WTC11 (cell line): ENCODE measurements at regions of chr7 and their contacts with region 1.

Region 1: GRCh38 chr7:2471396-2471795 is 4.8 kb downstream of the GRIFIN start:
- DNase-seq: peak; percentile 55
- ATAC-seq: peak; percentile 33
- H3K4me3 Mint-ChIP-seq: no peak overlapping the region
- H3K27ac Mint-ChIP-seq: no peak overlapping the region
- H3K4me1 Mint-ChIP-seq: peaks cover 31% of the 10 kb centered on the region
- H3K27me3 Mint-ChIP-seq: no peaks in the 10 kb centered on the region
- CTCF ChIP-seq: no peak

Region 2: GRCh38 chr7:2425749-2426148 is 45.6 kb before region 1 on chr7:
- CTCF ChIA-PET with region 1: interaction called, 17 read pairs
- POLR2A ChIA-PET with region 1: no interaction called
- DNase-seq: no peak
- ATAC-seq: no peak
- H3K4me3 Mint-ChIP-seq: no peak overlapping the region
- H3K27ac Mint-ChIP-seq: peak overlapping the region; percentile 25
- H3K4me1 Mint-ChIP-seq: peaks cover 12% of the 10 kb centered on the region
- H3K27me3 Mint-ChIP-seq: no peaks in the 10 kb centered on the region
- CTCF ChIP-seq: no peak

Region 3: DNA sequence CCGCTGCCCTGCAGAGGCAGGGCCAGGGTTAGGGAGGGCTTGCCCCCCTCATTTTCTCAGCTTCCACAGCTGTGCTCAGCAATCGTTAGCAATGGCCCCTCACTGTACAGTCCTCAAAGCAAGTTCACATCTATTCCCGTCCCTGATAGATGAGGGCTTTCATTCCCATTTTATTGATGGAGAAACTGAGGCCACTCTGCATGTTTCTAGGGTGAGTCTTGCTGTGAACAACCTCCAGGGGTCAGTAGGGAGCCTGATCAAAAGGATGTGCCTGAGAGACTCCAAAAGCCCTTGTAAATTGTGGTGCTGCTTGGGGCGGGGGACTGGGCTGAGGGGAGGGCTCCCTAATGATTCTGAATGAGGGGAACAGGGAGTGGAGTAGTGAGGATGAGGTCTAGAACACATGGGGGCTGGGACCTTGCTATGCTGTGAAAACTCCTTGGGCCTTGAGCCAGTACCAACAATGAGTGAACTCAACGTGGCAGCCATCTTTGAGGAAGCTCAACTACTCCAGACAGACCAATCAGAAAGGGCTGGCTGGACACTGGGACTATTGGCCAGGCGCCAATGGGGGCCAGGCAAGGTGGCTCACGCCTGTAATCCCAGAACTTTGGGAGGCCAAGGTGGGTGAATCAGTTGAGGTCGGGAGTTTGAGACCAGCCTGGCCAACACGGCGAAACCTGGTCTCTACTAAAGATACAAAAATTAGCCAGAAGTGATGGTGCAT is 11.5 kb after region 1 on chr7:
- CTCF ChIA-PET with region 1: interaction called, 34 read pairs
- POLR2A ChIA-PET with region 1: no interaction called
- DNase-seq: no peak
- ATAC-seq: no peak
- H3K4me3 Mint-ChIP-seq: no peak overlapping the region
- H3K27ac Mint-ChIP-seq: no peak overlapping the region
- H3K4me1 Mint-ChIP-seq: no peaks in the 10 kb centered on the region
- H3K27me3 Mint-ChIP-seq: no peaks in the 10 kb centered on the region
- CTCF ChIP-seq: no peak

Region 4: GRCh38 chr7:2529161-2530070 is 58.0 kb after region 1 on chr7:
- CTCF ChIA-PET with region 1: interaction called, 65 read pairs
- POLR2A ChIA-PET with region 1: interaction called, 6 read pairs
- DNase-seq: no peak
- ATAC-seq: no peak
- H3K4me3 Mint-ChIP-seq: no peak overlapping the region
- H3K27ac Mint-ChIP-seq: no peak overlapping the region
- H3K4me1 Mint-ChIP-seq: peaks cover 19% of the 10 kb centered on the region
- H3K27me3 Mint-ChIP-seq: no peaks in the 10 kb centered on the region
- CTCF ChIP-seq: no peak

Region 5: DNA sequence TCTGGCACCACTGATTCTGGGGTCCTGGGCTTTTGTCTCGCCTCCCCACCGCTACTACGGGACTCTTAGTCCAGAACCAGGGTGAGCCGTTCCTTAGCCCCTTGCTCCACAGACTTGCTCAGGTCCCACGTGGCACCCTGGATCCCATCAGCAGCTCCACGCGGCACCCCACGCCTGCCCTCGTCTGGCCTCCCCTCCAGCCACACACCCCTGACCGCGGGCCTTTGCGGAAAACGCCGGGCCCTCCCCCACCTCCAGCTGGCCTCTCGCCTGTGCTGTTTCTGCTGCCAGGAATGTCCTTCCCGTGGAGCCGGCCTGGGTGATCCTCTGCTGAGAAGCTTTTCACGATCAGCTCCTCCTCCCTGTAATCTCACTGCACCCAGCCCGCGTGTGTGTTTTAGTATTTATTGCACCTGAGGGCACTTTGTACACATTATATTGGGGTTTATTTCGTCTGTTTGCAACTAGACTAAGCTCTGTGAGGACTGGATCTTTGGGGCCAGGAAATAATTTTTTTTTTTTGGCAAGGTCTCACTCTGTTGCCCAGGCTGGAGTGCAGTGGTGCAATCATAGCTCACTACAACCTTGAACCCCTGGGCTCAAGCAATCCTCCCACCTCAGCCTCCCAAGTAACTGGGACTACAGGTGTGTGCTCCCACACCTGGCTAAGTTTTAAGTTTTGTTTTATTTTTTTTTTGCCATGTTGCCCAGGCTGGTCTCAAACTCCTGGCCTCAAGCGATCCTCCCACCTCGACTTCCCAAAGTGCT is 149.8 kb after region 1 on chr7:
- CTCF ChIA-PET with region 1: interaction called, 15 read pairs
- POLR2A ChIA-PET with region 1: interaction called, 3 read pairs
- DNase-seq: peak; percentile 62
- ATAC-seq: peak; percentile 34
- H3K4me3 Mint-ChIP-seq: no peak overlapping the region
- H3K27ac Mint-ChIP-seq: peak overlapping the region; percentile 89; the same call in 1 of the 2 replicates
- H3K4me1 Mint-ChIP-seq: peaks cover 35% of the 10 kb centered on the region
- H3K27me3 Mint-ChIP-seq: no peaks in the 10 kb centered on the region; the same call in 1 of the 2 replicates
- CTCF ChIP-seq: no peak